ENCODE measurements at regions of chr14 and their contacts with region 1.

Region 1: DNA sequence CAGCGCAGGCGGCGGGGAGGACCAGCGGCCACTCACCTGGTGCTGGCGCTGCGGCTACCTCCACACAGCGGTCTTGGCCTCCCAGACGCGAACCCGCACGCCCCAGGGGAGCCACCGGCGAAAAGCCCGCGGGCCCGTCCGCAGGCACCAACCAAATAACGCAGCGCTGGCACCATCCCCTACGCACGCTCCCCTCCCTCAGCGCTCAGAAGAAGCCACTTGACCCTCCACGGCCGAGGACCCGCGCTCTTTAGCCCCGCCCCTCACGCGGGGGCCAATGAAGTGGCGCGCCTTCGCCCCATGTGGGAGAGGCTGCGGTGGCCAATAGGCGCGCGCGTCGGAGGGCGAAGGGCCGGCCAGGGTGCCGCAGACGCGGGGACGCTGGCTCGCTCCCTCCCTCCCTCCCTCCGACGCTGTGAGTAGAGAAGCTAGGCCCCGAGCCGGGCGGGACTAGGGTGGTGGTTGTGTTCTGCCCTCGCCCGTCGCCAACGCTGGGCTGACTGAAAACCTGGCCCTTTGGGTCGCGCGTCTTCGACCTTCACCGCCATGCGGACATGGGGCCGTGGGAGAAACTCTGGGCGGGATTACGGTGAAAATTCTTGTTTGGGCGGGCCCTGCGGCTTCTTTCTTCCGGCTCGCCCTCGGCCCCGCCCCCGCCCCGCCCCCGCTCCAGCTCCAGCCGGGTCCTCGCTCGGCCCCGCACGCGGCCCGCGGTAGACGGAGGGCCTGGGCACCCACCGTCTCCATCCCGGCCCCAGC is at the starts of genes DMAC2L and L2HGDH:
- DNase-seq: peak; percentile 96
- ATAC-seq: peak; percentile 99
- total RNA-seq, gene DMAC2L: 25.4 TPM
- total RNA-seq, gene L2HGDH: 13.2 TPM

Region 2: DNA sequence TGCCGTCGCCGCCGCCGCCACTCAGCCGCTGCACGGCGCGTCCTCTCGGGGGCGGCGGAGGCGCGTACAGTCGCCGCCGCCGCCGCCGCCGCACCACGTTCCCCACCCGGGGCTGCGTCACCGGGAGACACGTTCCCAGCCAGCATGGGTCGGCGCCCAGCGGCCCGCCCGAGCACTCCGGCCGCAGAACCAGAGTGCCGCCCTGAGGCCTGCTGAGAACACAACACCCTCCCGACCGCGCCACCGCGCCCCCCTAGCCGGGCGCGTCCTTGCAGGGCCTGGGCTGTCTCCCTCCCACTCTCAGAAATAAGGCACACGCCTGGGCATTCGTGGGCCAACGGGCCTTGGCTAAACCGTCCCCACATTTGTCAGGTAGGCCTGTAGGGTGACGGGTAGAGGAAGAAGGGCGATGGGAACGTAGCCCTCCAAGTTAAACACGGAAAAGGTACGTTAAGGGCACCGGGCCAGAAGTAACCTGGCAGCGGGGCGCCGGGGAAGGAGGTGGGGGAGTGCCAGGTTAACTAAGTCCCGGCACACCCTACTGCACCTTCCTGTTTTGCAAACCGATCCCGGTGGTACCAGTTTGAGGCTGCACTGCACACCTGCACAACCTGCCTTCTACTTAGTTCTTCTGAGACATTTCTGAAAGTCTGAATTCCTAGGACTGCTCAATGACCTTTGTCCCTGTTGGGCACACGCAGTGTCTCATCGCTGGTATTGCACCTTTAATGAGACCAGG is 220.5 kb after region 1 on chr14 and contains the start of gene MAP4K5:
- intact Hi-C with region 1: loop called (anchors 2 kb)
- DNase-seq: peak; percentile 94
- ATAC-seq: peak; percentile 99
- total RNA-seq, gene MAP4K5: 13.9 TPM